ENCODE measurements at regions of chr5 and their contacts with region 1.

Region 1: GRCh38 chr5:115544436-115545350 is at the start of gene FEM1C:
- DNase-seq: peak; percentile 98
- ATAC-seq: peak; percentile 98
- total RNA-seq, gene FEM1C: 46.8 TPM

Region 2: DNA sequence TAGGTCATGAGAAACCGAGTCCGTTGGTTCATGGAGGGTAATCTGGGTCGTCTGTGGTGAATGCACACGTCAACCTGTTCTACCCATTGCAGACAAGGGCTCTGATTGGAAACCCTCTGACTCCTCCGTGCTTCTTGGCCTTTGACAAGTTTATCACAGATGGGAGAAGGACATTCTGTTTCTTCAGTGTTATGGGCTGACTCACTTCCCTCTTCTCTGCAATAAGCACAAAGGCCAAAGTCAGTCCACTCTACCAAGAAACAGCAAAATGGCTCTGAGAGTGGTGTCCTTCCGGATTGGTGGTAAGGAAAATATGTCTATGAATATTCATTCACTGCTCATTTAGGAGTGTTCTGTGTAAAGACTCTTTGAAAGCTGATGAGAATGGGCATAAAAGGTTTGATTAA is 89.4 kb before region 1 on chr5:
- intact Hi-C with region 1: loop called (anchors 5 kb)
- DNase-seq: no peak
- ATAC-seq: peak; percentile 34

Region 3: DNA sequence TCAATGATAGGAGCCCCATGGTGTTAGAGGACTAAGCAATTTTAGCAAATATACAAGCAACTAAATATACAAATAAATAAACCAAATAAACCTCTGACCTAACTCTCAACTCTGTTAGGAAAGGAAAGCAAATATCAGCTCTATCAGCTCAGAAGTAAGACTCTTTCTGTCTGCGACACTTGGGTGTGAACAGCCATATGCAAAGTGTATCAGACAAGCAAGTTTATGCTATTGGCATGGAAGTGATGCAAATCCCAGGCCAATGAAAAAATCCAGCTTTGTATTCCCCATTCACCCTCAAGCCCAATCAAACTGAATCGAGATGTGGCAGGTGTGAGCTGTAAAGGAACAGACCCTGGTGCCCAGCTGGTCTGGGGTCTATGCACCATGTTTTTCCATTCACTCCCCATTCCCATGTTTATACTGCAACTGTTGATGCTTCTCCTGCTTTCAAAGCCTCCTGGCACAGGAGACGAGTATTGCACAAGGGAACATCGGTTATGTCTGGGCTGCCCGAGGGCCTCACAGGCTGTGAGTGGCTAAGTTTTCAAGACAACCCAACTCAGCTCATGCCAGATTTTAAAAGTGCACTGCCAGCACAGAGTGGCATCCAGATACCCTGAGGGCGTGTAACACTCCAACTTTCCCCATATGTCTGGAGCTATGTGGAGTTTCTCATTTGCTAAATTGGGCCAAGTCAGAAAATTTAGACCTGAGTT is 73.2 kb before region 1 on chr5:
- intact Hi-C with region 1: loop called (anchors 2 kb)
- DNase-seq: peak; percentile 65
- ATAC-seq: peak; percentile 91

Region 4: GRCh38 chr5:115841382-115842088 is 296.8 kb after region 1 on chr5 and contains the starts of genes AP3S1 and ATG12:
- intact Hi-C with region 1: no loop called
- DNase-seq: peak; percentile 95
- ATAC-seq: peak; percentile 96
- total RNA-seq, gene AP3S1: 49.1 TPM
- total RNA-seq, gene ATG12: 23.0 TPM

Region 5: DNA sequence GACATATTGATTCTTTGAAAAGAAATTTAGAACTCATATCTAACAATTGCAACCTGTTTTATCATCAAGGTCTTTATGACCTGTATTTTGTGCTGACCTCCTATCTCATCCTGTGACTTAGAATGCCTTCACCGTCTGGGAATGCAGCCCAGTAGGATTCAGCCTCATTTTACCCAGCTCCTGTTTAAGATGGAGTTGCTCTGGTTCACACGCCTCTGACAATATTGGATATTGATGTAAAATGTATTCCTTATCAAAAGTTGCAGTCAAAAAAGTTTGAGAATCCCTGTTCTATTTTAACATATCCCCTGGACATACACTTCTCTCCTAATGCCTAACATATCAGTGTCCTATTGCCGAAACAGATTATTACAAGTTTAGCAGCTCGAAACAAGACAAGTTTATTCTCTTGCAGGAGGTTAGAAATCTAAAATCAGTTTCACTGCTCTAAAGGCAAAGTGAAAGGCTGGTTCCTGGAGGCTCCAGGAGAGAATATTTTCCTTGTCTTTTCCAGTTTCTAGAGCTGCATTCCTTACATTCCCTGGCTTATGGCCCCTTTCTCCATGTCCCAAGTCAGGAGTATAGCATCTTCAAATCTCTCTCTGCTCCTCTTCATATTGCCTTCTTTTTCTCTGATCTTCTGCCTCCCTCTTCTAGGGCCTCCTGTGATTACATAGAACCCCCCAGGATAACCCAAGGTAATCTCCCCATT is 386.1 kb after region 1 on chr5:
- intact Hi-C with region 1: no loop called
- DNase-seq: no peak
- ATAC-seq: no peak